PC-9 (cell line): ENCODE measurements at regions of chr1 and their contacts with region 1.

Region 1: DNA sequence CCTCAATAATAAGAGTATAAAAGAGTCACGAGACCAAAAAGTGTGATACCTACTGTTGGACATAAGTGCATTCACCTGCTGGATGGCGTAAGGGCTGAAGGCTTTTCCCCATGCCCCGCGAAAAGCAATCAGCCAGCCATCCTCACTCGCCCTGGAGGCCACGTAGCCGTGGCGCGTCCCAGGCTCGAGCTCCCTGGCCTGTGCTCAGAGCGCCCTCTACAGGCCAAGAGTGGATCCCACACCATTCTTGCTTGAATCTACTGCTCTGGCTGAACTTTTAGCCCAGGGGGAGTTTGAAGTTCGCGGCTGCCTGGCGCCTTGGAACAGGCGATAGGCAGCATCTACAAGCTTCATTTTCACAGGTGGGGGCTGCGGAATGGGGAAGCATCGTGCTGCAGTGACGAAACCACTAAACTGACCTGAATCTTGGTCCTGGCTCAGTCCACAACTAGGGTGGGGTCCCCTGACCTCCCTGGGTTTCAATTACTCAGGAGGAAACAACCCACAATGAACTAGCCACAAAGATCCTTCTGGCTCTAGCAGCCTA is 70.3 kb upstream of the SERBP1 start:
- DNase-seq: peak; percentile 74 to 89
- H3K4me3 ChIP-seq: no peak overlapping the region; the same call in 1 of the 2 replicates
- H3K27ac ChIP-seq: no peak overlapping the region
- H3K4me1 ChIP-seq: no peaks in the 10 kb centered on the region
- H3K27me3 ChIP-seq: no peaks in the 10 kb centered on the region
- CTCF ChIP-seq: peak; percentile 96

Region 2: DNA sequence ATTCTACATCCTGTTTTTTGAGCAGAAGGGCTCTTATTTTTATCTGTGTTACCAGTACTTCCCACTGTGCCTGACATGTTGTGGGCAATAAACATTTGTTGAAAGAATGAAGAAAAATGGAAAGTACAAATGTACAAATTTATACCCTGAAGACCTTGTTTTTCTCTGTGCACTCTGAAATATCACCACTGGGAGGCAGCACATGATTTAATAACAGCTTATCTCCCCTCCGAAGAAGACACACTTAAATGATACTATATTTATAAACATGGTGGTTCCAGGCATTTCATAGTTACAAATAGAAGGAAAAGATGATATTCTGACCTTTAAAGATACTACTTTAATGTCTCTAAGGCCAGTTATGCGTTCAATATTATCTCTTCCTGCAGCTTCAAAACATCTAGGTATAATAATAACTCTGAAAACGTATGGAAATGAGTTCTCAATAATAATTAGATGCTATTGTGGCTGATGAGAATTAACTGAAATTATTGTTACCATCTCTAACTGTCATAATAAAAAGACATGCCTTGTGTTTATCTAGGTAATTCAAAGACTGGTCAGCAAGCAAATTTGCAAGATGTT is 735.4 kb before region 1 on chr1:
- CTCF ChIA-PET with region 1: no interaction called
- POLR2A ChIA-PET with region 1: no interaction called
- intact Hi-C with region 1: loop called (anchors 5 kb)
- DNase-seq: peak in 1 of 2 experiments; percentile 34
- H3K4me3 ChIP-seq: no peak overlapping the region
- H3K27ac ChIP-seq: no peak overlapping the region
- H3K4me1 ChIP-seq: no peaks in the 10 kb centered on the region
- H3K27me3 ChIP-seq: no peaks in the 10 kb centered on the region
- CTCF ChIP-seq: peak; percentile 86

Region 3: GRCh38 chr1:67214420-67215174 is 285.9 kb before region 1 on chr1:
- CTCF ChIA-PET with region 1: interaction called, 16 read pairs
- POLR2A ChIA-PET with region 1: interaction called, 4 read pairs
- intact Hi-C with region 1: loop called (anchors 1 kb)
- DNase-seq: peak in 1 of 2 experiments; percentile 24
- H3K4me3 ChIP-seq: no peak overlapping the region
- H3K27ac ChIP-seq: no peak overlapping the region
- H3K4me1 ChIP-seq: no peaks in the 10 kb centered on the region
- H3K27me3 ChIP-seq: no peaks in the 10 kb centered on the region
- CTCF ChIP-seq: peak; percentile 78

Region 4: GRCh38 chr1:67347688-67348472 is 152.6 kb before region 1 on chr1:
- CTCF ChIA-PET with region 1: interaction called, 10 read pairs
- POLR2A ChIA-PET with region 1: no interaction called
- intact Hi-C with region 1: loop called (anchors 1 kb)
- DNase-seq: peak; percentile 55
- H3K4me3 ChIP-seq: no peak overlapping the region
- H3K27ac ChIP-seq: no peak overlapping the region
- H3K4me1 ChIP-seq: no peaks in the 10 kb centered on the region
- H3K27me3 ChIP-seq: no peaks in the 10 kb centered on the region
- CTCF ChIP-seq: peak; percentile 78

Region 5: DNA sequence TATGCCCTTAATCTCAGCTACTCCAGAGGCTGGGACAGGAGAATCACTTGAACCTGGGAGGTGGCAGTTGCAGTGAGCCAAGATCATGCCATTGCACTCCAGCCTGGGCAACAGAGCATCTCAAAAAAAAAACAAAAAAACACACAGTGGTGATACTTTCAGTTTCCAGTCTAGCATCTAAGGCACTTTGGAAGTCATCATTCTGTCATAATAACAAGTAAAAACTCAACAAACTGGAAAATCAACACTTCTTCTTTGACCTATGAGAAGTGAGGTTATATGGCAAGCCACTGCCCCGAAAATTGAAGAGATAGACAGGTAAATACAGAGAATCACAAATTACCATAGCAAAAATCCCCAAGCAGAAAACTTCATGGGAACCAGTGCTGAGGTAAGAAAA is 140.9 kb before region 1 on chr1:
- CTCF ChIA-PET with region 1: no interaction called
- POLR2A ChIA-PET with region 1: no interaction called
- intact Hi-C with region 1: no loop called
- DNase-seq: no peak
- H3K4me3 ChIP-seq: no peak overlapping the region
- H3K27ac ChIP-seq: no peak overlapping the region
- H3K4me1 ChIP-seq: 0 out of 2 replicates have a peak, but pooled peaks cover 5% of the 10 kb centered on the region
- H3K27me3 ChIP-seq: no peaks in the 10 kb centered on the region
- CTCF ChIP-seq: no peak

Region 6: DNA sequence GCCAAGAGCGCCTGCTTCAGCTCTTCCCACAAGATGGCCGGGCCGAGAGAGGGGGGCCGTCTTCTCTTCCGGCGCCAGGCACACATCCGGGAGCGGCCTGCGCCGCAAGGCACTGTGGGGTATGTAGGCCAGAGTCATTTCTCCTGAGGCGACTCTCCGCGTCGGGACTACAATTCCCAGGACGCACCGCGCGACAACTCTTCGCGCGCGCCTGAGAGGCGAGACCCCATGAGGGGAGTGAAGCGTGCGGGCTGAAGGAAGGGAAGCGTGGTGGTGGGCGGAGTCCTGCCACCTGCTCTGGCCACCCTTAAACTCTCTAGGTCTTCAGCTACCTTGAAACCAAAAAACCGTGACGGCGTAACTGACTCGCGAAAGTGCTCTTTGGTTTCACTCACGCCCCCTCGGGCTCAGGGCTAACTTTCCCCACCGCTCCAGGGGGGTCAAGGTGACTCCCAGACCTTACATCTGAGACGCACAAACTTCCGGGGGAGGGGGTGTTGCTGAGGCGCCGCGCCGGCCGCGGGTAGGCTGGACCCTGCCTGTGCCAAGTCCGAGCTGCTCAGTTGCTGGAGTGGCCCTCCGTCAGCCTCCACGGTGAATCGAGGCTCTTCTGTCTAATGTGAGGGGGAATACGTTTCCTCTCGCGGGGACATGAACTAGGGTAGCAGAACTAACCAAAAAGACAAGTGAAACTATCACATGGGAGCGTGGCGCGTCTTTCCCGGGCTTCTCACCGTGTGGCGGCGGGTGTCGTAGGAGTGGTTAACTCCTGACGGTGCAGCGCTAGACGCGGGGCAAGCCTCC is 69.9 kb before region 1 on chr1 and contains the start of gene SERBP1:
- CTCF ChIA-PET with region 1: interaction called, 12 read pairs
- POLR2A ChIA-PET with region 1: no interaction called
- intact Hi-C with region 1: loop called (anchors 2 kb)
- DNase-seq: peak; percentile 93 to 97
- H3K4me3 ChIP-seq: peak within 1 kb of the TSS; percentile 78
- H3K27ac ChIP-seq: peak within 1 kb of the TSS; percentile 88
- H3K4me1 ChIP-seq: peaks cover 34% of the 10 kb centered on the region
- H3K27me3 ChIP-seq: no peaks in the 10 kb centered on the region
- CTCF ChIP-seq: 0 out of 2 replicates have a peak, but pooled peaks have one; percentile 11
- total RNA-seq, gene SERBP1: 312 and 339 TPM in 2 replicates